Activated T-helper 2 cell treated with anti-CD3 and anti-CD28 coated beads, Interferon-gamma antibody, Interleukin-2, Interleukin-4, amounts not matched to agents 10 μg/mL and 5 μg/mL and 100 μg/mL, durations not matched to agents 14 hours and 24 hours and 36 hours (primary cell): ENCODE measurements at regions of chr3 and their contacts with region 1.

Region 1: DNA sequence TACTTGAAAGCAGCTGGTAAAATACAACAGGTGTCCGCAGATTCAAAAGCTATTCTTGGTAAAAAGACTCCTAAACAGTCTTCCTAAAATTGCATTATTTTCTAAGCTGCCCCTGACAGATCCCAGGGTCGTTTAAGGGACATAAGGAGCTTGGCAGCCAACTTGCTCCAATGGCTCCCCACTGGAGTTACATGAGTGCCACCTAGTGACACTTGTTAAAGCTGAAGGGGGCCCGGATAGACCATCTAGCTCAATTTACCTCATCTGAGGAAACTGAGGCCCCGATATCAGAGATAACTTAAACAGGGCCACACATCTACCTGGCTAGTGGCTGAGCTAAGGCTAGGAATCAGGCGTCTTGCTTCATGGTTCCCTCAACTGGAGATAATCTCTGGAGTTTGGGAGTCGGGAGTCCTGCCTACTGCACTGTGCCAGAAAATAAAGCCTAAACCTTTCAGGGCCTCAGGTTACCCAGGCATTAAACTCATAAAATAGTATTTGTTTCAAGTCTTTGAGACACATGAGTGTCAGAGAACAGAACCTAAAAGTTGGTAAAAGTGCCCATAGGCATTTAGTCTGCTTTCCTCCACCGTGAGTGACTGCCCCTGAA is 6.5 kb upstream of the TBC1D23 start:
- DNase-seq: peak; percentile 23
- H3K4me3 Mint-ChIP-seq: no peak overlapping the region
- H3K27ac Mint-ChIP-seq: no peak overlapping the region
- H3K4me1 Mint-ChIP-seq: peaks cover 2% of the 10 kb centered on the region
- H3K27me3 Mint-ChIP-seq: no peaks in the 10 kb centered on the region

Region 2: DNA sequence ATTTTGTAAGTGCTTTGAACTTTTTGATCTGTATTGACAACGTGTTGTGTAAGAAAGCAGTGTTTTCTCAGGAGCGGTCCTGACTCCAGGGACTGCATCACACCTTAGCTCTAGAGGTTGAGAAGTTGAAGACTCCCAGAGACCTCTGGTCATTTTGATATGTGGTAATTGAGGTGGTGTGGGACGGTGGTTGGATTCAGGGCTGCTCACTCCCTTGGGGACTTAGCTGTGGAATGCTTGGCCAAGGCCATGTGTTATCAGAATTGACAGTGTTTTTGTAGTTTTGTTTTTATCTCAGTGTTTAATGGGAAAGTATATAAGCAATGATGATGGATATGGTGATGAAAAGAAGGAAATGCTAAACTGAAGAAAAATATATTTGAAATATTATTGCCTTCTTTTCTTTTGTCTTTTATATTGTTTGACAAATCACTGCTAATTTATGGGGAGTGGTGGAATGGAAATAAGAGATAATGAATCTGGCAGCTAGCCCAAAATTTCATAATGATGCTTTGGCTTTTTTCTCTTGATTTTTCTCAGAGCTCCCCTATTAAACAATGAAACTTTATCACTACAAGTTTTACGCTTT is 420.6 kb before region 1 on chr3:
- intact Hi-C with region 1: loop called (anchors 1 kb)
- DNase-seq: no peak
- H3K4me3 Mint-ChIP-seq: no peak overlapping the region
- H3K27ac Mint-ChIP-seq: no peak overlapping the region
- H3K4me1 Mint-ChIP-seq: peaks cover 26% of the 10 kb centered on the region
- H3K27me3 Mint-ChIP-seq: no peaks in the 10 kb centered on the region

Region 3: DNA sequence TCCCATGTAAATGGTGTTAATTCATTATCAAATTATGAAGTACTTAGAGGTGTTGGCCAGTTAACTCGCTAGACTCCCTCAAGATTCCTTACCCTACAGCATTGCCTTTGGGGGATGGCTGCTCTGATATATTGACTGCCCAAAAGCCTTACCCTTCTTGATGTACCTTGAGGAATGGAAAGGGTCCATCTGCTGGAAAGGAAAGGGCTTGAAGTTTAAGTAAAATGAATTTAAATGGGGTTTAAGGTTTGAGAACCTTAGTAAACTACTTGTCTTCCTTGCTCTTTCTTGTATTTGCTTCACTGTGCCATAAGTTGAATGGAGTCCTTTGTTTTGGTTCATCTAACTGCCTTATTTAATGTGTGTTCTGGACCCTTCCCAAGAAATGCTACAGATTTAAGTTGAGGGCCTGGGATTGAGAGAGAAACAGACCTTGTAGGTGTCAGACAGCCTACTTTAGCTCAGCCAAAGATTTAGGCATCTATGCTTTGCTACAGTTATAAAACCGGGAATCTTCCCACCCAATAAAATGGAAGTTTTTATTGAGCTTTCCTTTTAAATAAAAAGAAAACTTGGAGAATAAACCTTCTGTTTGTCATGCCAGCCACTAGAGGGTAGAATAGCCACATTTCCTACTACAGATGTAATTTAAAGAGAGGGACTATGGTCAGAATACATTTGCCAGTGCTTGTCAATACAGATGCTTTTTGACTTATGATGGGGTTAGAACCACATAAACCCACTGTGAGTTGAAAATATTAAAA is 411.3 kb before region 1 on chr3:
- intact Hi-C with region 1: loop called (anchors 1 kb)
- DNase-seq: no peak
- H3K4me3 Mint-ChIP-seq: no peak overlapping the region
- H3K27ac Mint-ChIP-seq: no peak overlapping the region
- H3K4me1 Mint-ChIP-seq: peaks cover 26% of the 10 kb centered on the region
- H3K27me3 Mint-ChIP-seq: no peaks in the 10 kb centered on the region

Region 4: DNA sequence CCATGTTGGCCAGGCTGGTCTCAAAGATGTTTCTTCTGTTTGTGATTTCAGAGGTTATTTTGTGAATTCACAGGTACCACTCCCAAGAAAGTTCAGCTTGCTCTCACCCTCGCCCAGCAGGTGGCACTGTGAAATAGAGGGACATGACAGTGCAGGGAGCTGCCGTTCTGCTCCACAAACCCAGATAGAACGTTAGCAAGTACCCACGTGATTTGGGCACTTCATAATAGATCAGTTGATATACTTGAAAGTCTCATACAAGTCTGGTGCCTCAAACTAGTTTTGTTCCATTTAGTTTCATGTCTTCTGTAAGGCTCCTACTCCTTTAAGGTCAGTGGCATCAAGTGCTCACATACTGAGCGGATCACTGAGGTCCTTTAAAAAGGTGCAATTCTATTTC is 185.4 kb before region 1 on chr3:
- intact Hi-C with region 1: loop called (anchors 1 kb)
- DNase-seq: peak; percentile 74
- H3K4me3 Mint-ChIP-seq: no peak overlapping the region
- H3K27ac Mint-ChIP-seq: no peak overlapping the region
- H3K4me1 Mint-ChIP-seq: peaks cover 46% of the 10 kb centered on the region
- H3K27me3 Mint-ChIP-seq: no peaks in the 10 kb centered on the region

Region 5: GRCh38 chr3:100196896-100197871 is 57.1 kb before region 1 on chr3:
- intact Hi-C with region 1: no loop called
- DNase-seq: no peak
- H3K4me3 Mint-ChIP-seq: no peak overlapping the region
- H3K27ac Mint-ChIP-seq: no peak overlapping the region
- H3K4me1 Mint-ChIP-seq: no peaks in the 10 kb centered on the region
- H3K27me3 Mint-ChIP-seq: peaks cover 2% of the 10 kb centered on the region